ENCODE measurements at regions of chr5 and their contacts with region 1.

Region 1: DNA sequence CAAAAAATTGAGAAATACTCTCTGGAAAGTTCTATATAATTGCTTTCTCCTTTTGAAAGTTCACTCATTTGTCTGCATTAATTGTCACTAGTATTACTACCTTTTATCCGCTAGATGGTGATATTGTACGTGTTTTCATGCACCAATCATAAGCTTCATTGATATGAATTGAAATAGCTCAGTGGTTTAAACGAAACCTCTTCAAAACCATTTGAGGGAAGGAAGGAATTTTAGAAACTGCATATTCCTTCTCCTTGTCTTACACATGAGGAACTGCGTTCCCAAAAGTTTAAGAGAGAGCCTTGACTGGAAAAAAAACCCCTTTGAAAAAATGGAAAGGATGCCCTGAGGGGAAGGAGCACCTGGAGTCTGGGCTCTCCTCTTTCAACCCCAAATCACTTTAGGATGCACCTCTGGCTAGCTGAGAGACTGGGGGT is 98.6 kb downstream of the YTHDC2 start:
- DNase-seq: peak in 2 of 9 experiments; percentile 36 to 60
- ATAC-seq: peak; percentile 71
- H3K4me3 ChIP-seq: no peak overlapping the region
- H3K4me3 Mint-ChIP-seq: no peak overlapping the region
- H3K27ac ChIP-seq: no peak overlapping the region
- H3K27ac Mint-ChIP-seq: no peak overlapping the region
- H3K4me1 ChIP-seq: no peaks in the 10 kb centered on the region
- H3K4me1 Mint-ChIP-seq: no peaks in the 10 kb centered on the region
- H3K27me3 ChIP-seq: no peaks in the 10 kb centered on the region
- H3K27me3 Mint-ChIP-seq: peaks cover 19% of the 10 kb centered on the region
- CTCF ChIP-seq: peak; percentile 69

Region 2: GRCh38 chr5:113598926-113599325 is 13.2 kb before region 1 on chr5:
- CTCF ChIA-PET with region 1: interaction called, 10 read pairs
- POLR2A ChIA-PET with region 1: no interaction called
- intact Hi-C with region 1: no loop called
- DNase-seq: no peak
- ATAC-seq: no peak
- H3K4me3 ChIP-seq: no peak overlapping the region
- H3K4me3 Mint-ChIP-seq: no peak overlapping the region
- H3K27ac ChIP-seq: no peak overlapping the region
- H3K27ac Mint-ChIP-seq: no peak overlapping the region
- H3K4me1 ChIP-seq: no peaks in the 10 kb centered on the region
- H3K4me1 Mint-ChIP-seq: no peaks in the 10 kb centered on the region
- H3K27me3 ChIP-seq: no peaks in the 10 kb centered on the region
- H3K27me3 Mint-ChIP-seq: no peaks in the 10 kb centered on the region
- CTCF ChIP-seq: no peak

Region 3: DNA sequence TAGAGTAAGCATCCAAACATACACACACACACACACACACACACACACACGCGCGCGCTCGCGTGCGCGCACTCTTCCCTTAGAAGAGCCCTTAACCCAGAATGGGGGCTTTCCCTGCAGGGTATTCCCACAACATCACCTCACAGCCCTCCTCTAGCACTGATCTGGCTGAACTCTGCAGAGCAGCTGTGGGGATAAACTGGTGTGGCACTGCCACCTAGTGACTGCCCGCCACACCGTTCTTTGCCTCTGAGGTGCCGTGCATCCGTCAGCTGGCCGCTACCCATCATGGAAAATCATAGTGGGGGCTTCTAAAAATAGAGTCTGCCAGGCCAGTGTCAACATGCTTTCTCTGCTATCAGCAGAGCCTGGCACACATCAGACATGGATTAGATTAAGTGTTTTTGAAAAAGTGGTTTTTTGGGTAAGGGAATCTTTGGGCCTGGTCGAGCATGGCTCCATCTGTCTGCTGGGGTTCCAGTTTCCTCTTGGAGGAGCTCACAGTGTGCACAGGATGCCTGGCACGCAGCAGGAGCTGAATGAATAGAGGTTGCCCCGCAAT is 837.9 kb after region 1 on chr5:
- CTCF ChIA-PET with region 1: interaction called, 5 read pairs
- POLR2A ChIA-PET with region 1: no interaction called
- intact Hi-C with region 1: loop called in 1 of 2 experiments (anchors 2 kb)
- DNase-seq: peak in 5 of 9 experiments; percentile 10 to 45 (median 22)
- ATAC-seq: peak; percentile 44
- H3K4me3 ChIP-seq: no peak overlapping the region
- H3K4me3 Mint-ChIP-seq: no peak overlapping the region
- H3K27ac ChIP-seq: no peak overlapping the region
- H3K27ac Mint-ChIP-seq: no peak overlapping the region
- H3K4me1 ChIP-seq: no peaks in the 10 kb centered on the region
- H3K4me1 Mint-ChIP-seq: peaks cover 2% of the 10 kb centered on the region
- H3K27me3 ChIP-seq: no peaks in the 10 kb centered on the region
- H3K27me3 Mint-ChIP-seq: peaks cover 2% of the 10 kb centered on the region
- CTCF ChIP-seq: peak; percentile 22

Region 4: GRCh38 chr5:115246361-115246991 is 1634.4 kb after region 1 on chr5:
- CTCF ChIA-PET with region 1: interaction called, 3 read pairs
- POLR2A ChIA-PET with region 1: no interaction called
- intact Hi-C with region 1: loop called (anchors 1 kb)
- DNase-seq: peak in 2 of 9 experiments; percentile 44 to 60
- ATAC-seq: peak; percentile 63
- H3K4me3 ChIP-seq: no peak overlapping the region
- H3K4me3 Mint-ChIP-seq: no peak overlapping the region
- H3K27ac ChIP-seq: no peak overlapping the region
- H3K27ac Mint-ChIP-seq: no peak overlapping the region
- H3K4me1 ChIP-seq: no peaks in the 10 kb centered on the region
- H3K4me1 Mint-ChIP-seq: peaks cover 18% of the 10 kb centered on the region
- H3K27me3 ChIP-seq: no peaks in the 10 kb centered on the region
- H3K27me3 Mint-ChIP-seq: no peaks in the 10 kb centered on the region
- CTCF ChIP-seq: peak; percentile 87

Region 5: DNA sequence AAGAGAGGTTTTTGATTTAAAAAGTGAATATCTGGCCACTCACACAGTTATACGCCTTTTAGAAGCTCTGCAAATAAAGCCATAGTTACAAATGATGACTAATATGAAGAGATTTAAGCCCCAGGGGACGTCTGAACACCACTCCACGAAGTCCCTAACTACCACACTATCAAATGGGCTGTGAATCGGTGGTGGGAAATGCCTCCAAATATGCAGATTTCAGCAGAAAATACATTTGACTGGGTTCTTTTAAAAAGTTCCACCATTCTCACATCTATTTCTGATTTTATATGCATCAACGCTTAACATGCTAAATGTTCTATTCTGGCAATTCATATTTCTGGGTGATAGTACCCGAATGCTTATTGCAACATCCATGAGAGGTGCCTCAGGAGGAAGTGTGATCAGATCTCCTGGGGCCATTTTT is 1967.7 kb after region 1 on chr5:
- CTCF ChIA-PET with region 1: interaction called, 3 read pairs
- POLR2A ChIA-PET with region 1: no interaction called
- intact Hi-C with region 1: loop called (anchors 2 kb)
- DNase-seq: no peak
- ATAC-seq: no peak
- H3K4me3 ChIP-seq: no peak overlapping the region
- H3K4me3 Mint-ChIP-seq: no peak overlapping the region
- H3K27ac ChIP-seq: no peak overlapping the region
- H3K27ac Mint-ChIP-seq: no peak overlapping the region
- H3K4me1 ChIP-seq: no peaks in the 10 kb centered on the region
- H3K4me1 Mint-ChIP-seq: no peaks in the 10 kb centered on the region
- H3K27me3 ChIP-seq: no peaks in the 10 kb centered on the region
- H3K27me3 Mint-ChIP-seq: no peaks in the 10 kb centered on the region
- CTCF ChIP-seq: no peak

Region 6: GRCh38 chr5:115586601-115587048 is 1974.5 kb after region 1 on chr5:
- CTCF ChIA-PET with region 1: no interaction called
- POLR2A ChIA-PET with region 1: no interaction called
- intact Hi-C with region 1: loop called in 1 of 2 experiments (anchors 2 kb)
- DNase-seq: peak in 2 of 9 experiments; percentile 29 to 51
- ATAC-seq: peak; percentile 36
- H3K4me3 ChIP-seq: no peak overlapping the region
- H3K4me3 Mint-ChIP-seq: no peak overlapping the region
- H3K27ac ChIP-seq: no peak overlapping the region
- H3K27ac Mint-ChIP-seq: no peak overlapping the region
- H3K4me1 ChIP-seq: no peaks in the 10 kb centered on the region
- H3K4me1 Mint-ChIP-seq: no peaks in the 10 kb centered on the region
- H3K27me3 ChIP-seq: no peaks in the 10 kb centered on the region
- H3K27me3 Mint-ChIP-seq: no peaks in the 10 kb centered on the region
- CTCF ChIP-seq: peak; percentile 63